Right ventricle myocardium inferior (tissue), 1 donor: ENCODE measurements at regions of chr9 and their contacts with region 1.

Region 1: GRCh38 chr9:33076358-33077004 is at the start of gene SMU1:
- DNase-seq: peak; percentile 99
- ATAC-seq: peak; percentile 99
- total RNA-seq, gene SMU1: 15.2 TPM

Region 2: DNA sequence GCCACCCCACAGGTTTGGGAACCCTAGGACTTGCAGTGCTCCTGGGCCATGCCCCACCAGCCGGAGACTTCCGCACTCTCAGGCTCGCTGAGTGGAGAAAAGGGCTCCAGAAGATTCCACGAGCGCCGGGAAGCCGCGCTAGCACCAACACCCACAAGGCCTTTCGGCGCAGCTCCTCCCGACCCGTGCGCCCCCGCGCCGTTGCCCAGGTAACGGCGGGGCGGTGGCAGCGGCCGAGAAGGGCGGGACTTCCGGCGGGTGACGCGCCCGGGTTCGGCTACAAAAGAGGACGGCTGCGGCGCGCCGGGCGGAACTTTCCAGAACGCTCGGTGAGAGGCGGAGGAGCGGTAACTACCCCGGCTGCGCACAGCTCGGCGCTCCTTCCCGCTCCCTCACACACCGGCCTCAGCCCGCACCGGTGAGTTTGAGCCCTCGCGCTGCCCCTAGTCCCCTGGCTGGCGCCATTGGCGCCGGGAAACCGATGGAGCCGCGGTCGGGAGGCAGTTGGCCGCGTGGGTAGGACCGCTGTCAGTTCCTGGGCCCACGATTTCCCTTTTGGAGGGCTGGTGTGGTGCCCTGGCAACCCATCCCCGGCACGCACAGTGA is 51.4 kb before region 1 on chr9 and contains the start of gene DNAJA1:
- intact Hi-C with region 1: loop called (anchors 5 kb)
- DNase-seq: peak; percentile 97
- ATAC-seq: peak; percentile 98
- total RNA-seq, gene DNAJA1: 82.3 TPM

Region 3: DNA sequence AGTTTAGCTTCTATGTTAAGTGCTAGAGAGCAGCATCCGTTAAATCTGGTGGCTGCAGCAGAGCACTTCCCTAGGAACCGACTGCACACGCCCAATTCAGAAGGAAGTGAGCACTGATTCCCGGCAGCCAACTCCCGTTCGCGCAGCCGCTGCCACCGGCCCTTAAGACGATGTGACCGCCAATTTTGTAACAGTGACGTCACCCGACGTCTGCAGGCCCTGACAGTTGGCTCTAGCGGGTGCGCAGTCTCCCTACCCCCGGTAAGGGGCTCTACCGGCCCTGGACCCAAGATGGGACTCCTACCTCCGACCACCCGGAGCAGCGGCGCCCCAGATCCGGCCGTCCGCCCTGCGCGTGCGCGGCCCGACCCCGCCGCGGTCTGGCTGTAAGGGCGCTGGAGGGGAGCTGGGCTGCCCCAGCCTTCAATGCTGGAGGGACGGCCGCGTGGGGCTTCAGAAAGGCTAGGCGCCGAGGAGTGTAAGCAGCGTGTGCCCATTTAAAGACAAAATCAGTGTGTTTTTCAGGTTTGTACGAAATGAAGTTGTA is 32.3 kb before region 1 on chr9:
- intact Hi-C with region 1: loop called (anchors 2 kb)
- DNase-seq: peak; percentile 96
- ATAC-seq: peak; percentile 93

Region 4: GRCh38 chr9:33116860-33117259 is 40.4 kb after region 1 on chr9:
- intact Hi-C with region 1: no loop called
- DNase-seq: no peak
- ATAC-seq: peak; percentile 60

Region 5: DNA sequence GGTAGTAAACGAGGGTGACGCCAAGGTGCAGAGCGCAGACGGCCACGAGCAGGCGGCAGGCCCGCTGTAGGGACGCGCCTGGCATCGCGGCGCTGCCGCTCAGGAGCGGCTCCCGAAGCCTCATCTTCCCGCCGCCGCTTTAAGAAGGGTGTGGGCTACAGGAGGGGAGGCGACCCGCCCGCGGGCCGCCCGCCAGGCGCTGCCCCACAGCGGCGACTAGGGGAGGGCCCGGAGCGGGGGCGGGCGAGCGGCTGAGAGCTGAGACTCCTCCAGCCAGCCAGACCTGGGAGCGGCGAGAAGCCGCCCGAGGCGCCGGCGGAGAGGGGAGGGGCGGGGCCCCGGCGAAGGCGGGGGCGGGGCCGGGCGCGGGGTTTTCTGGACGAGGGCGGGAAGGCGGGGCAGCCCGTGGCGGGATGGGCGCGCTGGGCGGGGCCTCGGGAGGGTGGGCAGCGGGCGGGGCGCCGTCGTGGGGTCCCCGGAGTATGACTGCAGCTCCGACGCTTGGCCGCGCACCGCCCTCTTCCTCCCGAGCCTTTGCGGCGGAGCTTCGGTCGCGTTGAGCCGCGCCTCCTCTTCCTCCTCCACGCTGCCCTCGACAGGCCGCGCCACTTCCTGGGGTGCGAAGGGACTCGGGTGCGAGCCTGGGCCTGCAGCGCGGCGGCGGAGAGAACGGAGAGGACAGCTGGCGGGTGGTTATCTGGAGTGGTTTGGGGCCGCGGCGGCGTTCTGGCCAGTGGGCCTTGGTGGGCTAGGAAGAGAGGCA is 90.7 kb after region 1 on chr9 and contains the start of gene B4GALT1:
- intact Hi-C with region 1: loop called (anchors 2 kb)
- DNase-seq: peak; percentile 98
- ATAC-seq: peak; percentile 83
- total RNA-seq, gene B4GALT1: 43.6 TPM

Region 6: DNA sequence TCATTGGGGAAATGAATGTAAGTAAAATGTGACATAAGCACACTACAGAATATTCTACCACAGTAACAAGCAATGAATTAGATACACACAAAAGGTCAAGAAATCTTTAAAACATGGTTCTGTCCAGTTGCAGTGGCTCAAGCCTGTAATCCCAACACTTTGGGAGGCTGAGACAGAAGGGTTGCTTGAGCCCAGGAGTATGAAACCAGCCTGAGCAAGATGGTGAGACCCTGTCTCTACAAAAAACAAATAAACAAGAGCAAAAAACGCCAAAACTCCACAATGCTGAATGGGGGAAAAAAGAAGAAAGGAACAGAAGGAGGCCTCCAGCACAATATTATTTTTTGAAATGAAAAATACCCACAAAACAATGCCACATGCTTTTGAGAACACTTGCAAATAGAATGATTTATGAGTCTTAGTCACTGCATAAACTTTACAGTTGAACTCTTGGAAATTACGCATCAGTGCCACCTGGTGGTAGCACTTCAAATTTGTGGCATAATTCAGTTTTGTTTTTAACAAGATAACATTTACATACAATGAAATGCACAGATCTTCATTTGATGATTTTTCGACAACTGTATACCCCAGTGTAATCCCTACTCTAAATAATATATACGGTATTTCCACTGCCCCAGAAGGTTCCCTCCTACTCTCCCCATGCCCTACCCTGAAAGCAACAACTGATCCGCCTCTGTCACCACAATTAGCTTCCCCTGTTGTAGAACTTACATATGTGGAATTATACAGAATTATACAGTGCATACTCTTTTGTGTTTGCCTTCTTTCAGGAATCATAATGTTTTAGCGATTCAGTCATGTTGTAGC is 149.1 kb after region 1 on chr9:
- intact Hi-C with region 1: loop called (anchors 1 kb)
- DNase-seq: no peak
- ATAC-seq: no peak